ENCODE measurements at regions of chrX and their contacts with region 1.

Region 1: GRCh38 chrX:45801554-45801953 is 600.9 kb upstream of the DIPK2B start:
- DNase-seq: peak in 2 of 3 donors; percentile 55 to 60
- H3K4me3 ChIP-seq: no peak overlapping the region
- H3K27ac ChIP-seq: no peak overlapping the region
- H3K4me1 ChIP-seq: peaks cover 3 to 43% (median 10%) of the 10 kb centered on the region in 4 experiments
- H3K27me3 ChIP-seq: peaks cover 0 to 15% (median 0%) of the 10 kb centered on the region in 5 experiments

Region 2: DNA sequence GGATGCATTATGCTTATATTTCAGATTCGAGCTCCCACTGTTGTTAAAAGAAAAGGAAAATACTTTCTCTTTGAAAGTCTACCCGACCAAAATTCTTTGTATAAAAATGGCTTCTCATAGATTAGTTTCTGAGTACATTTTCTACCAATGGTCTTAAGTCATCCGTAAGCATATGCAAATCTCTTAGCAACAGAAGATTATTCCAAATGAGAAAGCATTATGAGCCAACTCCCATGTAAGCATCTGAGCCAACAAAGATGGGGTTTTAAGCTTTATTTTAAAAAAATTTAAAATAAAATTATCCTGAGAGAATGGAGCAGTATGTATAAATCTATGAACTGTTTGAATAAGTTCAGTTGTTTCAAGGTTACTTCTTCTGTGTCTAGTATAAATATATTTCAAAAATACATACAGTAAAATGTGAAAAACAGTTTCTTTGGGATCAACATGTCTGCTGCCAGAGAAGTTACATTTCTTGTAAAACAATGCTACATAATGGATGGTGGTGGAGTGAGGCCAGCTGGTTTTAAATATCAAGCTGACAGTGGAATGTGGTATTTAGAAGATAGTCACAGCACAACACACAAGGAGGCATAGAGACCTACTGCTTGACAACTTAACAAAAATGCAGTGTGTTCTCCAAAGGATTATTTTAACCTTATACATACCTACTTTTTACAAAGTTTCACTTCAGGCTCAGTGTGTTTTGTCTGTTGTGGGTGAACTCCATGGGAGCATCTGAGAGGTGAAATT is 401.4 kb before region 1 on chrX:
- CTCF ChIA-PET with region 1: no interaction called
- POLR2A ChIA-PET with region 1: no interaction called
- DNase-seq: no peak
- H3K4me3 ChIP-seq: no peak overlapping the region
- H3K27ac ChIP-seq: no peak overlapping the region
- H3K4me1 ChIP-seq: no peaks in the 10 kb centered on the region
- H3K27me3 ChIP-seq: no peaks in the 10 kb centered on the region

Region 3: DNA sequence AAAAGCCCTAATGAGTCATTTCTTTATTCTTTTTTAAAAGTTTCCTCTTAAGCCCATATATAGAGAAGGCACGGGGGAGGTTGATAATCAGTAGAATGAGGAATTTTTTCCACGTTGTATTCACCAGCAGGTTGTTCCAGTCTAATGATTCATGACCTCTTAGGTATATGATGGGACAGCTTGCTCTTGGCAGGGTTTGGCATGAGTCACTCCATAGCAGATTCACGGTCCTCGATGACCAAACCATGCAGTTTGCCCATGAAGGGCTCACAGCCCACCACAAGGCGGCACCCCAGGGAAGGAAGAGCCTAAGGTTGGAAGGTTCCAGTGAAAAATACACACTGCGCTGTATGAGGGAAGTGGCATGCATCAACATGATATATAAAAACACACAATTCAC is 22.9 kb after region 1 on chrX:
- CTCF ChIA-PET with region 1: no interaction called
- POLR2A ChIA-PET with region 1: no interaction called
- DNase-seq: peak; percentile 36 to 73 (median 62)
- H3K4me3 ChIP-seq: no peak overlapping the region
- H3K27ac ChIP-seq: no peak overlapping the region
- H3K4me1 ChIP-seq: no peaks in the 10 kb centered on the region
- H3K27me3 ChIP-seq: peaks cover 0 to 5% (median 0%) of the 10 kb centered on the region in 5 experiments

Region 4: GRCh38 chrX:46376246-46376885 is 574.8 kb after region 1 on chrX:
- CTCF ChIA-PET with region 1: interaction called, 13 read pairs
- POLR2A ChIA-PET with region 1: no interaction called
- DNase-seq: peak; percentile 49 to 75 (median 73)
- H3K4me3 ChIP-seq: no peak overlapping the region
- H3K27ac ChIP-seq: no peak overlapping the region
- H3K4me1 ChIP-seq: peaks cover 3 to 6% (median 4%) of the 10 kb centered on the region in 4 experiments
- H3K27me3 ChIP-seq: peaks cover 0 to 4% (median 0%) of the 10 kb centered on the region in 5 experiments